ENCODE measurements at regions of chr15 and their contacts with region 1.

Region 1: GRCh38 chr15:100902436-100903167 is 16.6 kb upstream of the LRRK1 start:
- DNase-seq: peak; percentile 52
- H3K4me3 ChIP-seq: 0 out of 2 replicates have a peak overlapping the region, but pooled peaks have one; percentile 13
- H3K27me3 ChIP-seq: no peaks in the 10 kb centered on the region
- CTCF ChIP-seq: no peak

Region 2: GRCh38 chr15:100764778-100765466 is 137.7 kb before region 1 on chr15:
- CTCF ChIA-PET with region 1: no interaction called
- POLR2A ChIA-PET with region 1: interaction called, 12 read pairs
- DNase-seq: no peak
- H3K4me3 ChIP-seq: no peak overlapping the region
- H3K27me3 ChIP-seq: no peaks in the 10 kb centered on the region
- CTCF ChIP-seq: no peak

Region 3: DNA sequence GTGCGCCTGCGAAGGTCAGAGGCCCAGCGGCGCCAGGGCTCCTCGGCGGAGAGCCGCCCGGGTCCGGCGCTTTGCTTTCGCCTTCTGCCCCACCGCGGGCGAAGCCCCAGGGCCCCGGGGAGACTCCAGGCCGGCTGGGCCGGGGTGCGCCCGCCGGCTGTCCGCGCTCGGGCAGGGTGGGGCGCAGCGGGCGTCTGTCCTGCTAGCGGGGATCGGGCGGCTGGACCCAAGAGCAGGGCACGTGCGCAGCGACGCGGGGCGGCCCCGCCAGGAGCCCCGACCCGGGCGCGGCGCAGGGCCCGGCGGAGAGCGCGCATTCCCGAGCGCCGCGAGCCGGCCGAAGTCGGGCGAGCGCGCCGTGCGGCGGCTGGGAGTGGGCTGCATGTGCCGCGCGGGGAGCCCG is 23.5 kb before region 1 on chr15:
- CTCF ChIA-PET with region 1: no interaction called
- POLR2A ChIA-PET with region 1: no interaction called
- DNase-seq: no peak
- H3K4me3 ChIP-seq: peak overlapping the region; percentile 40
- H3K27me3 ChIP-seq: peaks cover 28% of the 10 kb centered on the region
- CTCF ChIP-seq: no peak

Region 4: DNA sequence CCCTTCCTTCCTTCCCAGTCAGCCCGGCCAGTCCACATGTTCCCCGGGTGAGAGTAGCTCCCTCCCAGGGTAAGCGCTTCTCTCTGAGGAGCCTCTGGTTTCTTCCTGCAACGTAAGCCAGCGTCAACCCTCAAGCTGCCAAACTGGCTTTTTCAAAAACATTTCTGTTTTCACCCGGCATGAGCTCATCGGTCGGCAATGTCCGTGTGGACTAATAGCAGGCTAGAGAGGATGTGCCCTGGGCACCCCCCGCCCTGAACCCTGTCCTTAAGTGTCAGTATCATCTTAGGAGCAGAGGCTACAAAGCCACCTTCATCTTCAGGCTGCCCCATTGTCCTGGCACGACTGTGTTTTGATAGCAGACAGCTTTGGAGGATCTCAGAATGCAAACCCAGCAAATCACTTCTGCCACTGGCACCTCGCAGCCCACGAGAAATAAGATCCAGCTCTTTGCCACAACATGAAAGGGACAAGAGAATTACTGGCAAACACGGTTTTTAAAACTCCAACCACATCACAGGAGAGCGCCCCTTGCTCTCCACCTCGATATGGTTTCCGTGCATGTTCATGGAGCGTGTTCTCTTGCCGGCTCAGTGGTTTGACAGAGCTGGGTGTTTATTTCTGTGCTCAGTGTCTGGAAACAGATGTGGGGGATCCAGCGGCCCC is 13.1 kb before region 1 on chr15:
- CTCF ChIA-PET with region 1: no interaction called
- POLR2A ChIA-PET with region 1: no interaction called
- DNase-seq: peak; percentile 65
- H3K4me3 ChIP-seq: no peak overlapping the region
- H3K27me3 ChIP-seq: no peaks in the 10 kb centered on the region
- CTCF ChIP-seq: no peak

Region 5: GRCh38 chr15:100958326-100959065 is 55.9 kb after region 1 on chr15:
- CTCF ChIA-PET with region 1: no interaction called
- POLR2A ChIA-PET with region 1: no interaction called
- DNase-seq: no peak
- H3K4me3 ChIP-seq: no peak overlapping the region
- H3K27me3 ChIP-seq: no peaks in the 10 kb centered on the region
- CTCF ChIP-seq: no peak